OCI-LY7 (cell line): ENCODE measurements at regions of chr1 and their contacts with region 1.

Region 1: DNA sequence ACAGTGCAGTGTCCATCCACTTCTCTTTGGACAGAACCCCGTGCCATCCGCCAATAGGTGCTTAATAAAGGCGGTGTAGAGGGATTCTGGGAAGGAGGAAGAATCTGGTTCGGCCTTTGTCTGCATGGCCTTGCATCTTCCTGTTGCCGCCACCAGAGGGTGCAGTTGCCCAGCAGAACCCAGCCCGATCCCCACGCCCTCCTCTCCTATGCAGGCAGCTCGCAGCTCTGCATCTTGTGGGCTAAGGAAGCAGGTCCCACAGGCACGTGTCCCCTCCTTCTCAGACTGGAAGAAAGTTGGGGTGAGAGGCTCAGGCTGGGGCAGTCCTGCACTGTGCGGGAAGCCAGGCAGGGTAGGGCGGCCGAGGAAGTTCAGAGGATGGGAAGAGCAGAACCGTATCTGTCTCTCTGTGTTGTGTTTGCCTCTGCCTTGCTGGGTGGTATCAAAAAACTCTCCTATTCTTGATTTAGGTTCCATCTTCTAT is 20.8 kb downstream of the NAV1 start:
- DNase-seq: peak; percentile 76
- H3K4me3 ChIP-seq: no peak overlapping the region
- H3K27ac ChIP-seq: no peak overlapping the region
- H3K4me1 ChIP-seq: no peaks in the 10 kb centered on the region
- CTCF ChIP-seq: peak; percentile 93

Region 2: DNA sequence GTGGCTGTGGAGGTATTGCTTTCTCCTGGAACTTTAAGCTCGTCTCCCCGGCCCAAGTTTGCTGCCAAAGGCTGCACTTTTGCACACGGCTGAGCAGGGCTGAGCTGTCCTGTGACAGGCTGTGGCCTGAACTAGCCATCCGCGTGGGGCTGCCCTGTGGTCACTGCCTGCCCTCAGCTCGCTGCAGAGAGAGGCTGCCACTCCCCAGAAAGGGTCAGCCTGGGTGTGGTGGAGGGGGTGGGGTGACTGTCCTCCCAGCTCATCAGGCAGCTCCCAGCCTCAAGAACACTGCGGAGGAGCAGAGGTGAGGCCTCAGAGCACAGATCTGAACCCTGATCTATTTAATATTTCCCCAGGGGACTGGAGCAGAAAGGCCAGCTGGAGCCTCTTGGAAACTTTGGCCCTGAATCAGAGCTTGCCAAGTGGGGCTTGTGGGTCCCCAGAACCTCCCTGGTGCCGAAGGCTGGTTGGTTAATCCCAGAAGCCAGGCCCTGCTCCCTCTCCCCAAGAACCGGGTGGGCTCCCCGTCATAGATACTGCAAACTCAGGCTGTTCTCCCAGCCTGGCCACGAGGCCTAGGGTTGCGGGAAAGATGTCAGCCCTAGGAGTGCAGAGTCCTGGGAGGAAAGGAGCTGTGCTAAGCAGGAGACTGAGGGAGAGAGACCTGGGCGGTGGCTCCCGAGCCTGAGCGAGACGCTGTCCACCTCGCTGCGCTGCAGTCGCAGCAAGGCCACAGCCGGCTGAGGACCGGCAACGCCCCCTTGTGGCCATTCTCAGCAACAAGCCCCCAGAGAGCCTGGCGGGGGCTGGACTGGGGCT is 144.1 kb after region 1 on chr1:
- CTCF ChIA-PET with region 1: interaction called, 5 read pairs
- POLR2A ChIA-PET with region 1: no interaction called
- intact Hi-C with region 1: loop called (anchors 1 kb)
- DNase-seq: peak; percentile 73
- H3K4me3 ChIP-seq: no peak overlapping the region
- H3K27ac ChIP-seq: no peak overlapping the region
- H3K4me1 ChIP-seq: peaks cover 4% of the 10 kb centered on the region
- CTCF ChIP-seq: peak; percentile 87